ENCODE measurements at regions of chr19 and their contacts with region 1.

Region 1: GRCh38 chr19:19459707-19460251 is 54.3 kb downstream of the GATAD2A start:
- DNase-seq: no peak
- ATAC-seq: peak; percentile 69
- H3K4me3 Mint-ChIP-seq: peak overlapping the region; percentile 83
- H3K27ac Mint-ChIP-seq: peak overlapping the region; percentile 86
- H3K4me1 Mint-ChIP-seq: peaks cover 72% of the 10 kb centered on the region
- H3K27me3 Mint-ChIP-seq: no peaks in the 10 kb centered on the region
- CTCF ChIP-seq: no peak

Region 2: GRCh38 chr19:19385108-19385899 is 74.5 kb before region 1 on chr19:
- CTCF ChIA-PET with region 1: no interaction called
- POLR2A ChIA-PET with region 1: interaction called, 3 read pairs
- intact Hi-C with region 1: loop called (anchors 1 kb)
- DNase-seq: peak; percentile 98
- ATAC-seq: peak; percentile 89
- H3K4me3 Mint-ChIP-seq: peak overlapping the region; percentile 87
- H3K27ac Mint-ChIP-seq: peak overlapping the region; percentile 83
- H3K4me1 Mint-ChIP-seq: peaks cover 43% of the 10 kb centered on the region
- H3K27me3 Mint-ChIP-seq: no peaks in the 10 kb centered on the region
- CTCF ChIP-seq: no peak

Region 3: DNA sequence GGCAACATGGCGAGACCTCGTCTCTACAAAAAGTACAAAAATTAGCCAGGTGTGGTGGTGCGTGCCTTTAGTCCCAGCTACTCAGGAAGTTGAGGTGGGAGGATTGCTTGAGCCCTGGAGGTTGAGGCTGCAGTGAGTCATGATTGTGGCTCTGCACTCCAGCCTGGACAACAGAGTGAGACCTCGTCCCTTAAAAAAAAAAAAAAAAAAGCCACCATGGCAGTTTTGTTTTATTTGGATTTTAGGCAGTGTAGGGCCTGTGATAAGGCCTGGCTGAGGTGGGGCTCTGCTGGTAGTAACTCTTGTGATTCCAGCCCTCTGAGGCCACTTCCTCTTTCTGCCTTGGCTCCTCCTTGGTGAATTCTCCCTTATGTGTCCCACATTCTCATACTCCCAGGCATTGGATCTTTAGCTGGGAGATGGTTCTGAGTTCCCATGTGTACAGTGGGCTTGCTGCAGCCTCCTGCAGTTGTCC is 15.1 kb before region 1 on chr19:
- CTCF ChIA-PET with region 1: no interaction called
- POLR2A ChIA-PET with region 1: interaction called, 5 read pairs
- intact Hi-C with region 1: loop called (anchors 1 kb)
- DNase-seq: no peak
- ATAC-seq: peak; percentile 65
- H3K4me3 Mint-ChIP-seq: peak overlapping the region; percentile 54
- H3K27ac Mint-ChIP-seq: peak overlapping the region; percentile 78
- H3K4me1 Mint-ChIP-seq: peaks cover 64% of the 10 kb centered on the region
- H3K27me3 Mint-ChIP-seq: no peaks in the 10 kb centered on the region
- CTCF ChIP-seq: no peak

Region 4: GRCh38 chr19:19475849-19476828 is 16.4 kb after region 1 on chr19:
- CTCF ChIA-PET with region 1: no interaction called
- POLR2A ChIA-PET with region 1: no interaction called
- intact Hi-C with region 1: loop called (anchors 2 kb)
- DNase-seq: no peak
- ATAC-seq: no peak
- H3K4me3 Mint-ChIP-seq: no peak overlapping the region
- H3K27ac Mint-ChIP-seq: peak overlapping the region; percentile 47
- H3K4me1 Mint-ChIP-seq: peaks cover 63% of the 10 kb centered on the region
- H3K27me3 Mint-ChIP-seq: no peaks in the 10 kb centered on the region
- CTCF ChIP-seq: no peak

Region 5: GRCh38 chr19:19526581-19527370 is 67.0 kb after region 1 on chr19:
- CTCF ChIA-PET with region 1: no interaction called
- POLR2A ChIA-PET with region 1: no interaction called
- intact Hi-C with region 1: no loop called
- DNase-seq: no peak
- ATAC-seq: no peak
- H3K4me3 Mint-ChIP-seq: no peak overlapping the region
- H3K27ac Mint-ChIP-seq: no peak overlapping the region
- H3K4me1 Mint-ChIP-seq: peaks cover 34% of the 10 kb centered on the region
- H3K27me3 Mint-ChIP-seq: no peaks in the 10 kb centered on the region
- CTCF ChIP-seq: no peak